HCT116 (cell line): ENCODE measurements at regions of chr16 and their contacts with region 1.

Region 1: DNA sequence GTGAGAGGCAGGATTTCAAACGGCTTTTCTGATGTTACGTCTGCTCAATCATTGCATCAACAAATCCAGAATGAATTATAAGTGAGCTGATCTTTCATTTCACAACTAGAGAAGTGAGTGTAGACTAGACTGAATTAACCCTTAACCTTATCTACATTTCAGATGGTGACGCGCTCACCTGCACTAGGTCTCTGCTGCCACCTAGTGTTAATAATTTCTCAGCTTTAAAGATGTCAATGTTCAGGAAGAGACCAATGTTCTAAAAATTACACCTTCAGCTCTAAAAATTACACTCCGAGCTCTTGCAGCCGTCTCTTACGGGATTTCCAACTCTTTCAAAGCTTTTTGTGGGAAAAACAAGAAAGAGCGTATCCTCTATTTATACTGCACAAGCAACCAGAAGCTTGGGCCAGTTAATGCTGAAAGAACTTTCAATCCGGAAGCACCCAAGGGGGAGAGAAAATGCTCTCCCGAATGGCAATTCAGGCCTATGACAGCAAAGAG is 88.2 kb upstream of the FA2H start:
- DNase-seq: peak; percentile 46
- ATAC-seq: peak; percentile 93
- H3K4me3 ChIP-seq: no peak overlapping the region
- H3K27ac ChIP-seq: no peak overlapping the region
- H3K4me1 ChIP-seq: peaks cover 1 to 7% of the 10 kb centered on the region in 2 experiments; a peak in 2 of 4 replicates
- H3K27me3 ChIP-seq: no peaks in the 10 kb centered on the region
- CTCF ChIP-seq: peak; percentile 69 to 94 (median 93)
- POLR2A ChIP-seq: no peak
- RAD21 ChIP-seq: peak; percentile 97

Region 2: GRCh38 chr16:74309789-74310781 is 552.7 kb before region 1 on chr16:
- CTCF ChIA-PET with region 1: interaction called, 13 read pairs
- POLR2A ChIA-PET with region 1: no interaction called
- RAD21 ChIA-PET with region 1: no interaction called
- intact Hi-C with region 1: no loop called
- DNase-seq: peak; percentile 41
- ATAC-seq: peak; percentile 72
- H3K4me3 ChIP-seq: no peak overlapping the region
- H3K27ac ChIP-seq: no peak overlapping the region
- H3K4me1 ChIP-seq: no peaks in the 10 kb centered on the region
- H3K27me3 ChIP-seq: no peaks in the 10 kb centered on the region
- CTCF ChIP-seq: peak; percentile 73 to 84 (median 80)
- POLR2A ChIP-seq: no peak
- RAD21 ChIP-seq: peak; percentile 89

Region 3: DNA sequence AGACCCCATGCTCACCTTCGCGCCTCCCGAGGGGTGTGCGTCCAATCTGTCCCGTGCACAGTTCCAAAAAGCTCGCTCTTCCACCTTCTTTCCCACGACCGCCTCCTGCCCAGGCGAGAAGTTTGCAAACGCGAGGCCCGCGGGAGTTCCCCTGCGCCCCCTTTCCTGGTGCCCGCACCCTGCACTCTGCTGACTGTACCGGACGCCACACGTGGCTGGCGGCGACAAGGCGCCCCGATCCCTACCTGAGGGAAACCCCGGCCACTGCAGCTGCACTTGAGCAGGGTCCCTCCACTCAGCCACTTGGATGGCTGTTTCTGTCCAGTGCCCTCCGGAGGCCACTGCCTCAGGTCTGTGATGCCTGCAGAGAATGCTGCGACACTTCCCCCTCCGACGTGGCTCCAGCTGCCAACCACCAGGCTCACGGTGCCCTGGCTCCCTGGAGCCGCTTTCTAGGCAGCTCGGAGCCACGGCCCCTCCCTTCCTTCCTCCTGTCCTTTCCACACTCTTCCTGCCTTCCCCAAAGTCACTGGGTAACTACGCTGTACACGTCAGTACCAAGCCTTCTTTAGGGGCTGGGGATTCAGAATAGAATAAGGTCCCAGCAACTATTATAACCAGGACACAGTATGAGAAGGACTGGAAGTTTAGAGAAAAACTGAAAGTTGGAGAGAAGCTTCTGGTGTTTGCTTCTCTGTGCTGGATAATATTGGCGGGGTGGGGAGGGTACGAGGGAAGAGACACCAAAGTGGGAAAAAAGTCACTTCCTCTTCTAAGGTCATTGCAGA is 162.2 kb before region 1 on chr16 and contains the start of gene MLKL:
- CTCF ChIA-PET with region 1: interaction called, 14 read pairs
- POLR2A ChIA-PET with region 1: interaction called, 3 read pairs
- RAD21 ChIA-PET with region 1: interaction called in 1 of 2 experiments, 4 read pairs
- intact Hi-C with region 1: no loop called
- DNase-seq: peak; percentile 31
- ATAC-seq: peak; percentile 78
- H3K4me3 ChIP-seq: peak within 1 kb of the TSS; percentile 59 to 73
- H3K27ac ChIP-seq: peak within 1 kb of the TSS; percentile 75
- H3K4me1 ChIP-seq: peaks cover 0 to 28% of the 10 kb centered on the region in 2 experiments; a peak in 2 of 4 replicates
- H3K27me3 ChIP-seq: no peaks in the 10 kb centered on the region
- CTCF ChIP-seq: peak in 1 of 3 experiments; percentile 12; a peak in 1 of 6 replicates
- POLR2A ChIP-seq: peak; percentile 89
- RAD21 ChIP-seq: no peak
- total RNA-seq, gene MLKL: 8.3 TPM

Region 4: DNA sequence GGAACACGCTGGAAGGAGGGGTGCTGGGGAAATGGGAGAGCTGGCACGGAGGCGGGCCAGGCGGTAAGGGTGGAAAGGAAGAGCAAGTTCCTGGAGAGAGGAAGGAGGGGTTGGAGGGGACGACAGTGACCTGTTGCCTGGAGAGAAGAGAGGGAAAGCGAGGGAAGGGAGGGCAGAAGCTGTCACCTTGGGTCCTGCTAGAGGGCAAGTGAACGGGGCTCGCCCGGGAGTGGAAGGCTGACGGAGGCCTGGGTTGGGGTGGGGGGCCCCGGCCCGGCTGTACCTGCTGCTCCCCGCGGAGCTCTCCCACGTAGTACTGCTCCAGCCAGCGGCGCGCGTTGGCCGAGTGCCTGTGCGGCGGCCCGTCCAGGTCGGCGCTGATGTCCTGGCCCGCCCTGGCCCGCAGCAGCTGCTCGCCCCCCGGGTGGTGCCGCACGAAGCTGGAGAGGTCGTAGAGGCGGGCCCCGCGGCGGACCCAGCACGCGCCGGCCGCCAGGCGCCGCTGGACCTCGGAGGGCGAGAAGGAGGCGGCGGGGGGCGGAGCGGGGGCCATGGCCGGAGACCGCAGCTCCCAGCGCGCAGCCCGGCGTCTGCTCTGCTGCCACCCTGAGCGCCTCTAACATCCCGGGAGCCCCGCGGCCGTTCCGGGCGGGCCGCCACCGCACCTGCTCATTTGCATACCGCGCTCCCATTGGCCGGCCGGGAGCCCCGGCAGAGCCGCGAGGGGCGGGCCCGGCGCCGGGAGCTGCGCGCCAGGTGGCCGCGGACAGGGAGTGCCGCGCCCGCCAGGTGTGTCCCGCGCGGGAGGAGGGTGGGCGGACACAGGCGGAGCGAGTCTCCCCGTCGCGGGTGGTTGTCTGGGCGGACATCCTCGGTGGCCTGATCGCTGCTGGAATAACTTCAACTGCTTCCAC is 88.3 kb before region 1 on chr16 and contains the start of gene FA2H:
- CTCF ChIA-PET with region 1: interaction called, 11 read pairs
- POLR2A ChIA-PET with region 1: interaction called, 3 read pairs
- RAD21 ChIA-PET with region 1: no interaction called
- intact Hi-C with region 1: no loop called
- DNase-seq: peak; percentile 59
- ATAC-seq: peak; percentile 99
- H3K4me3 ChIP-seq: peak within 1 kb of the TSS; percentile 53 to 56
- H3K27ac ChIP-seq: peak within 1 kb of the TSS; percentile 19; the same call in 1 of the 2 replicates
- H3K4me1 ChIP-seq: peaks cover 14 to 33% of the 10 kb centered on the region in 2 experiments; a peak in 3 of 4 replicates
- H3K27me3 ChIP-seq: no peaks in the 10 kb centered on the region
- CTCF ChIP-seq: peak in 1 of 3 experiments; percentile 43; a peak in 3 of 6 replicates
- POLR2A ChIP-seq: no peak
- RAD21 ChIP-seq: no peak
- total RNA-seq, gene FA2H: 11.1 TPM

Region 5: DNA sequence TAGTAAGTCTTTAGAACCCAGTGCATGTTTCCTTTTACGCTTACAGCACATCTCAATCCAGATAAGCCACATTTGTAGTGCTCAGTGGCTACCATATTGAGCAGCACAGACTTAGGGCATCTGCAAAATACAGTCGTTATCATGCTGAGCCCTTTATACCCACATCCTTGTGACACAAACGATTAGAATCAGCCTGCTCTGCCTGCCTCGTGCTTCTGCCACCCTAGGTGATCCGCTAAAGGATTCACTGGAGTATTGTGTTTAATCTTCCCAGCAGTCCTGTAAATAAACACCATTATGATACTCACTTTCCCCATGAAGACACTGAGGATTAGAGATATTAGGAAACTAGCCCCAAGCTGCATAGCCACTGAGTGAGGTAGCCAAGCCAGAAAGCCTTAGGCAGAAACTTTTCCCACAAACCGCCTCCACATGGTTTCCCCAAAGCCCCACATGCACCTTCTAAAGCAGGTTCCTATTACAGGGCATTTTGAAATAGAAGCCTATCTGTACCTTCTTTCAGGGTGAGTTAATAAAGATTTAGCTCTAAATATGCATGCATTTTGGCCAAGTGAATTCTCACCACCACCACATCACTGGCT is 36.8 kb before region 1 on chr16:
- CTCF ChIA-PET with region 1: no interaction called
- POLR2A ChIA-PET with region 1: no interaction called
- RAD21 ChIA-PET with region 1: no interaction called
- intact Hi-C with region 1: no loop called
- DNase-seq: no peak
- ATAC-seq: no peak
- H3K4me3 ChIP-seq: no peak overlapping the region
- H3K27ac ChIP-seq: no peak overlapping the region
- H3K4me1 ChIP-seq: no peaks in the 10 kb centered on the region
- H3K27me3 ChIP-seq: no peaks in the 10 kb centered on the region
- CTCF ChIP-seq: no peak
- POLR2A ChIP-seq: no peak
- RAD21 ChIP-seq: no peak

Region 6: GRCh38 chr16:74852500-74852875 is 10.3 kb before region 1 on chr16:
- CTCF ChIA-PET with region 1: interaction called, 10 read pairs
- POLR2A ChIA-PET with region 1: no interaction called
- RAD21 ChIA-PET with region 1: no interaction called
- intact Hi-C with region 1: no loop called
- DNase-seq: no peak
- ATAC-seq: no peak
- H3K4me3 ChIP-seq: no peak overlapping the region
- H3K27ac ChIP-seq: no peak overlapping the region
- H3K4me1 ChIP-seq: no peaks in the 10 kb centered on the region
- H3K27me3 ChIP-seq: no peaks in the 10 kb centered on the region
- CTCF ChIP-seq: no peak
- POLR2A ChIP-seq: no peak
- RAD21 ChIP-seq: no peak

Region 7: GRCh38 chr16:75110637-75111513 is 248.1 kb after region 1 on chr16:
- CTCF ChIA-PET with region 1: interaction called, 13 read pairs
- POLR2A ChIA-PET with region 1: no interaction called
- RAD21 ChIA-PET with region 1: interaction called in 1 of 2 experiments, 3 read pairs
- intact Hi-C with region 1: no loop called
- DNase-seq: peak; percentile 80
- ATAC-seq: peak; percentile 76
- H3K4me3 ChIP-seq: peak overlapping the region in 1 of 2 experiments; percentile 36; a peak in 2 of 4 replicates
- H3K27ac ChIP-seq: peak overlapping the region; percentile 91
- H3K4me1 ChIP-seq: peaks cover 35 to 49% of the 10 kb centered on the region in 2 experiments
- H3K27me3 ChIP-seq: no peaks in the 10 kb centered on the region
- CTCF ChIP-seq: peak in 2 of 3 experiments; percentile 84 to 87; a peak in 4 of 6 replicates
- POLR2A ChIP-seq: no peak
- RAD21 ChIP-seq: no peak